Activated CD4-positive, alpha-beta T cell treated with anti-CD3 and anti-CD28 coated beads for 36 hours (primary cell): ENCODE measurements at regions of chr3 and their contacts with region 1.

Region 1: DNA sequence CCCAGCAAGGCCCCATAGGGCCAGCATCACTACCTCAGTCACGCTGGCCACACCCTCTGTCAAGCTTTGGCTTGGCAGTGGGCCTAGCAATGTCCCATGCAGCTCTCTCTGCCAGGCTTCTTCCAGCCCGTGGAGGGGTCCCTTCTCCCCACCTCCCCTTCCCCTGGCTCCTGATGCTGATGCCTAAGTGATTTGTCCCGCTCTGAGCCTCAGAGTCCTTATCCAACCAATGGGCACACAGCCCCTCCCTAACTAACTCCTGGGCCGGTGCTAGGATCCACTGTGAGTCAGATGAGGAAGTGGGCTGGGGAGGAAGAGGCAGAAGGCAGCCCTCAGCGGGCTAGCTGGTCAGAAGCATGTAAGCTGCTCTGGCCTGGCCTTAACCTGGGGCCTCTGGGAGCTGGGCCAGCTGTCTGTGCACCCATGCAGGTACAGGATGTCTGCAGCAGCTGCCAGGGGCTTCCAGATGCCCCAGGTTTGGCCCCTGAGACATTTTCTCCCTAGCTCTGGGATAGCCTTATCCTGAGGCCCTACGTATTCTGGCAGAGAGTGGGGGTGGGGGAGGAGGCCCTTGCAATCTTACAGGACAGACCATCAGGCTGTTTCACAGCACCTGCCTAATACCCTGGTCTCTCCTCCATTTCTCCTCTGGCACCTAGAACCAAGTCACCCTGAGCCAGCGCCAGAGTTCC is 740 bp upstream of the ZBTB47 start:
- DNase-seq: no peak
- ATAC-seq: peak; percentile 15
- H3K4me3 Mint-ChIP-seq: no peak overlapping the region
- H3K27ac Mint-ChIP-seq: no peak overlapping the region
- H3K4me1 Mint-ChIP-seq: peaks cover 7% of the 10 kb centered on the region
- H3K27me3 Mint-ChIP-seq: peaks cover 2% of the 10 kb centered on the region

Region 2: DNA sequence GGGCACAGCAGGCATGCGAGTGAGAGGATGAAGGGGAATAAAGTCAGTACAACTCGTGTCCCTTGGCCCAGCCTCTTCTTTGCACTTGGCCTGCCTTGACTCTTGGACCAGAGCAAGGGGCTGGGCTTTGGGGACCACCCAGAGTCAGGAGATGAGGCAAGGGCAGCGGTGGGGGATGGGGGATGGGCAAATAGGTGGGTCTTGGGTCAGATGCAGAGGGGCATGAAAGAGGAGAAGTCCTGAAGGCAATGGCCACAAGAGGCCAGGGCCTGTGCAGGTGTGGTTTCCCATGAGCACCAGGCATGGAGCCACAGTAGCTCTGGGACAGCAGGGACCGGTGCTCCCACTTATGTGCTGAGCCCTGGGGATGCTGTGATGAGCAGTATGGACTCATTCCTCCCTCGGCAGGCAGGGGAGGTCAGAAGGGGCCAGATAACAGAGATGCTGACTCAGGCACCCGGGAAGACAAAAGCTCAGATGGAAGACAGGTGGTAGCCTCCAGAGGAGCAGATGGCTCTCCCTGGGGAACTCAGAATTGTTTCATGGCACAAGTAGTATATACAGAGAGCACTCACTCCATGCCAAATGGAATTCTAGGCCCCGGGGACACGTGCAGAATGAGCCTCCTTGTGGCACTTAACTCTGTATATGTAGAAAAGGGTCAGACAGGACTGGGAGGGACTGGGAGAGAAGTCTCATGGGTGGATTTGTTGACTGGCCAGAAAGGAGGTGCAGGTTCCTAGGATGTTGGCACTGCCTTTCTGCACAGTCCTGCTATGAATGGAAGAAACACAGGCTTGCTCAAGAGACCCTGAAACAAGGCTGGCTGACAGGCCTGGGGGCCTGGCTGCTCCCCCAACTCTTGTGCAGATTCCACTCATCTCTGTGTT is 15.0 kb after region 1 on chr3:
- CTCF ChIA-PET with region 1: no interaction called
- POLR2A ChIA-PET with region 1: no interaction called
- intact Hi-C with region 1: no loop called
- DNase-seq: no peak
- ATAC-seq: no peak
- H3K4me3 Mint-ChIP-seq: no peak overlapping the region
- H3K27ac Mint-ChIP-seq: no peak overlapping the region
- H3K4me1 Mint-ChIP-seq: no peaks in the 10 kb centered on the region
- H3K27me3 Mint-ChIP-seq: no peaks in the 10 kb centered on the region

Region 3: GRCh38 chr3:42739401-42740158 is 86.8 kb after region 1 on chr3:
- CTCF ChIA-PET with region 1: no interaction called
- POLR2A ChIA-PET with region 1: no interaction called
- intact Hi-C with region 1: loop called (anchors 5 to 10 kb)
- DNase-seq: no peak
- ATAC-seq: no peak
- H3K4me3 Mint-ChIP-seq: no peak overlapping the region
- H3K27ac Mint-ChIP-seq: no peak overlapping the region
- H3K4me1 Mint-ChIP-seq: peaks cover 7% of the 10 kb centered on the region
- H3K27me3 Mint-ChIP-seq: no peaks in the 10 kb centered on the region

Region 4: DNA sequence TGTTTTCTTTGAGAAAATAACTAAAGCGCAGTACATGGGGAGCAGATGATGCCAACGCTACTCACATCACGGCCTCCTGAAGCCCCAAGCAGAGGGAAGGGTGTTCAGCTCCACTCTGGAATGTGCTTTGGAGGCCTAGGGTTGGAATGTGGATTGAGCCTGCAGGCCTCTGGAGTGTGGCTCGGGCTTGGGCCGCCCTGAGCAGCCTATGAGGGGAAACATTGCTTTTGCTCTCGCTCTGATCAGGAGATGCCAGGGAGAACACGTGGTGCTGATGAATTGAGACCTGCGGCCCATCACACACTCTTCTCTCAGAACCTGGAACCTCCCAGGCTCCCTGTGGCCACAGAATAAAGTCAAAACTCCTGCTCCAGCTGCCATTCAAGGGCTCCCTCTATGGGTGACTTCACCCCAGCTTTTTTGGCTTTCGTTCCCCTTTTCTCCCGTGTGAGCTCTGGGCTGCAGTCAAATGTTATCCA is 97.0 kb after region 1 on chr3:
- CTCF ChIA-PET with region 1: no interaction called
- POLR2A ChIA-PET with region 1: no interaction called
- intact Hi-C with region 1: loop called (anchors 5 to 10 kb)
- DNase-seq: peak; percentile 33
- ATAC-seq: peak; percentile 55
- H3K4me3 Mint-ChIP-seq: no peak overlapping the region
- H3K27ac Mint-ChIP-seq: no peak overlapping the region
- H3K4me1 Mint-ChIP-seq: peaks cover 30% of the 10 kb centered on the region
- H3K27me3 Mint-ChIP-seq: no peaks in the 10 kb centered on the region